CD8-positive, alpha-beta T cell (primary cell): ENCODE measurements at regions of chr19 and their contacts with region 1.

Region 1: DNA sequence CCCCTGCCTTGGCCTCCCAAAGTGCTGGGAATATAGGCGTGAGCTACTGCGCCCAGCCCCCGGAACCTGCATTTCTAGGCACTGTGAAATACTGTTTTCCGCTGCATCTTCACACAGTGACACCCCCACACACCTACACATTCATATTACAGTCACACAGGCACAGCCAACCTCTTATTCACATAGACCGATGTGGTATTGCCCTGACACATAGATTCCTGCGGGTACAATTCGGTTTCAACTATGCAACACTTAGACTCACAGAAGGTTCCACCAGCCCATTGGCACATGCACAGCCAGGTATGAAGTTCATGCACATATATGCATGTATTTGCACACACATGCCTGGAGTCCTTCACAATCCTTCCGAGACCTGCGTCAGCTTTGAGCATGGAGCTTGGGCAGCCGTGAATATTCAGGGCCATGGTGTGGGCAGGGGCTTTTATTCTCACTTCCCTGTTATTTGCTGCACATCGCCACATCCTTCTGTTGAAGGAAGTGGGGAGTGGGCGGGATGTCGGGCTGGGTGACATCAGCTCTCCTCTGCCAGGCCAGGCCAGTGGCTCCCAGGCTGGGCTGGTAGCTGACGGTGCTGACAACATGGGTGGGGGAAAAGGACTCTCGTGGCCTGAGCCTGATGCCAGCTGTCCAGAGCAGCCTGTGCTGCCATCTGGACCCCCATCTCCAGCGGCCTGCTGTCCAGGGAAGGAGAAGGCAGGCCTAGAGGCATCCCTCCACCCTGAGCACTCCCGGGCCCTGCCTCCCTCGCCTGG is 5.4 kb upstream of the CDC37 start:
- DNase-seq: peak in 5 of 9 experiments; percentile 60 to 85 (median 68)
- ATAC-seq: peak; percentile 33
- H3K4me3 ChIP-seq: peak overlapping the region; percentile 9 to 26
- H3K4me3 Mint-ChIP-seq: peak overlapping the region; percentile 60
- H3K27ac ChIP-seq: peak overlapping the region; percentile 38 to 72
- H3K27ac Mint-ChIP-seq: peak overlapping the region; percentile 88
- H3K4me1 ChIP-seq: peaks cover 66% of the 10 kb centered on the region
- H3K4me1 Mint-ChIP-seq: peaks cover 66% of the 10 kb centered on the region
- H3K27me3 ChIP-seq: peaks cover 0 to 3% of the 10 kb centered on the region in 2 experiments
- H3K27me3 Mint-ChIP-seq: no peaks in the 10 kb centered on the region
- CTCF ChIP-seq: no peak

Region 2: DNA sequence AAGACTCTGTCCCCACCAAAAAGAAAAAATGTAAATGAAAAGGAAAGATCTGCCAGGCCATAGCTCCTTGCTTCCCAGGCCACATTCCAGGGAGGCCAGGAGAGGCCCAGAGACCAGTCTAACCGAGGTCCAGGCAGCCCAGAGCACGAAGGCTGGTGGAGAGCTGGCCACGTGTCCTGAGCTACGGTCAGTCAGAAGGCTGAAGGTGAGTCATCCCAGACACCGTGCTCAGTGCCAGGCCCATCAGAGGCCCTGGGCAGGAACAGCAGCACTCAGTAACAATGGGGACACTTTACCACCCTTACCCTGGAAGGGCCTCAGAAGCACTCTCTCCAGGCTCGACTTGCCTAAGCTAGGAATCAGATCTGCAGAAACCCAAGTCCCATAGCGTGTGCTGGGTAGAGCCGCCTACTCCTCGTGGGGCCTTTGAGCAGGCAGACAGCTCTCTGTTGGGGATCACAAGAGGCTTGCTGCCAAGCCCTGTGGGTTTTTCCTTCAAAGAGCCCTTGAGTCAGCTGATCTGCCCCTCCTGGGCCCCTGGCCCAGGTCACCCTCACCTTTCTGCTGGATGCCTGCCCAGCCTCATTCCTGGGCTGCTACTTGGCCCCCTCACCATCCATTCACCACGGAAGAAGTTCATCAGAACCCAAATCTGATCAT is 202.3 kb before region 1 on chr19:
- CTCF ChIA-PET with region 1: no interaction called
- POLR2A ChIA-PET with region 1: no interaction called
- intact Hi-C with region 1: no loop called
- DNase-seq: no peak
- ATAC-seq: no peak
- H3K4me3 ChIP-seq: no peak overlapping the region
- H3K4me3 Mint-ChIP-seq: no peak overlapping the region
- H3K27ac ChIP-seq: no peak overlapping the region
- H3K27ac Mint-ChIP-seq: no peak overlapping the region
- H3K4me1 ChIP-seq: no peaks in the 10 kb centered on the region
- H3K4me1 Mint-ChIP-seq: no peaks in the 10 kb centered on the region
- H3K27me3 ChIP-seq: no peaks in the 10 kb centered on the region
- H3K27me3 Mint-ChIP-seq: no peaks in the 10 kb centered on the region
- CTCF ChIP-seq: no peak

Region 3: DNA sequence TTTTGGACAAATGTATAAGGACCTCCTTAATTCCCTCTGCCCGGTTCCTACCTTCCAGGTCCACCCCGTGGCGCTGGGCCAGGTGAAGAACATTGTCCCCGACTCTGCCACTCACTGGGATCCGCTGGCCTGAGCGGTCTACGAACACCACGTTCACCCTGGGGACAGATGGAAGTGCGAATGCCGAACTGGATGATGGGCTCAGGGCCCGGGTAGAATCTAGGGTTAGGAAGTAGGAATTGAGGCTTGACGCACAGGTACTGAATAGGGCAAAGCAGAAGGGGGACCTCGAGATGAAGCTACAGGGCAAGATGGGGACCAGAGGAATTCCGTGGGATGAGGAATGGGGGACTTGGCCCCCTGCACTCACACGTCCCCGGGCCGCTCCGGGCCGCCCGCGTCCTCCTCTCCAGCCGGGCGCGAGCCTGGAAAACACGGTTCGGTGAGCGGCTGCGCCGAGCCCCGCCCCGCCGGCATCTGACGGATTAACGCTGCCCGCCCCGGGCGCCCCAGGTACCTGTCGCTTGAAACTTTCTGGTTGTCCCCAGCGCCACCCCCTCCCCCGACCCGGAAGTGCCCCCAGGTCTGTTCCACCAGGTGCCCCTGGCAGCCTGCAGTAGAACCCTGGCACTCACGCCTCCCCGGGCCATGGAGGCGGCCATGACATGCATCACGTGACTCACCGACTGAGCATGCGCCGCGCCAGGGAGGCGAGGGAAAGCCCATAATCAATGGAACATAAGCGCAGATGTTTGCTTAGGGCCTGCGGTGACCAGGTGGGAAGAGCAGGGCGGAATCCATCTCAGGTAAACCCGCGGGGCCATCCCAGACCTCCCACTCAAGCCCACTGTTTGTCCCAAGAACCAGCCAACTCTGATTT is 93.1 kb before region 1 on chr19 and contains the start of gene FDX2:
- CTCF ChIA-PET with region 1: no interaction called
- POLR2A ChIA-PET with region 1: no interaction called
- intact Hi-C with region 1: no loop called
- DNase-seq: peak; percentile 76 to 94 (median 91)
- ATAC-seq: peak; percentile 91
- H3K4me3 ChIP-seq: peak within 1 kb of the TSS; percentile 58 to 94
- H3K4me3 Mint-ChIP-seq: peak within 1 kb of the TSS; percentile 90
- H3K27ac ChIP-seq: peak within 1 kb of the TSS; percentile 41 to 51
- H3K27ac Mint-ChIP-seq: peak within 1 kb of the TSS; percentile 89
- H3K4me1 ChIP-seq: peaks cover 13% of the 10 kb centered on the region
- H3K4me1 Mint-ChIP-seq: peaks cover 12% of the 10 kb centered on the region
- H3K27me3 ChIP-seq: no peaks in the 10 kb centered on the region
- H3K27me3 Mint-ChIP-seq: no peaks in the 10 kb centered on the region
- CTCF ChIP-seq: no peak
- total RNA-seq, gene FDX2: 3.1 to 4.2 TPM

Region 4: DNA sequence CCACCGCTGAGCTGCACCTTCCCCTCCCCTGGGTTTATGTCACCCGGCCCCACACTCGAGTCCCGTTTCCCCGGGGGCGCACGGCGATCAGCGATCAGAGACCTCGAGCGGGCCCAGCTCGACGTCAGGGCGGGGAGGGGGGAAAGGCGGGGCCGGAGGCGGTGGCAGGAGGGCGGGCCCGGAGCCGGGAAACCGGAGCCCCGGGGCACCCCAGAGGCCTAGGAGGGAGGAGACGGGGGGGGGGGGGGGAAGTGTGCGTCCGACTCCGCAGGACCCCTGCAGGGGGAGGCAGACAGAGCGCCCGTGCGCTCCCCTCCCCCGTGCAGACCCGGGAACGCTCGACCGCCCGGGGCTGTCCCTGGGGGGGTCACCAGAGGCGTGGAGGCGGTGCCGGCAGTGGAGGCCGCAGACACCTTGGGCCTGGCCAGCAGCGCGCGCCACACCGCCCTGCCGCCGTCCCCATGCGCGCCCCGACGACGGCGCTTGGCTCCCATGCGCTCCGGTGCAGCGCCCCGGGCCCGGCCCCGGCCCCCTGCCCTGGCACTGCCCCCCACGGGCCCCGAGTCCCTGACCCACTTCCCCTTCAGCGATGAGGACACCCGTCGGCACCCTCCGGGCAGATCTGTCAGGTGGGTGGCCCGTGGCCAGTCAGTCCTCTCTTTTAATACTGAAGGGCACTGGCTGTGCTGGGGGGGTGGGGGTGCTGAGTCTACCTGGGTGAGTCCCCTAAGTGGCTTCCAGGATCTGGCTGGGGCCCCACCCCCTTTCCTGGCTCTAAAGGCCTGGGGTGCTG is 23.4 kb after region 1 on chr19:
- CTCF ChIA-PET with region 1: interaction called, 620 read pairs
- POLR2A ChIA-PET with region 1: interaction called, 12 read pairs
- intact Hi-C with region 1: loop called (anchors 1 kb)
- DNase-seq: peak in 8 of 9 experiments; percentile 60 to 90 (median 78)
- ATAC-seq: peak; percentile 35
- H3K4me3 ChIP-seq: peak overlapping the region; percentile 44 to 52
- H3K4me3 Mint-ChIP-seq: peak overlapping the region; percentile 87
- H3K27ac ChIP-seq: peak overlapping the region; percentile 43 to 77
- H3K27ac Mint-ChIP-seq: peak overlapping the region; percentile 92
- H3K4me1 ChIP-seq: peaks cover 37% of the 10 kb centered on the region
- H3K4me1 Mint-ChIP-seq: peaks cover 50% of the 10 kb centered on the region
- H3K27me3 ChIP-seq: peaks cover 0 to 7% of the 10 kb centered on the region in 2 experiments
- H3K27me3 Mint-ChIP-seq: peaks cover 23% of the 10 kb centered on the region
- CTCF ChIP-seq: no peak

Region 5: GRCh38 chr19:10748924-10749434 is 340.3 kb after region 1 on chr19:
- CTCF ChIA-PET with region 1: no interaction called
- POLR2A ChIA-PET with region 1: no interaction called
- intact Hi-C with region 1: no loop called
- DNase-seq: no peak
- ATAC-seq: no peak
- H3K4me3 ChIP-seq: no peak overlapping the region
- H3K4me3 Mint-ChIP-seq: no peak overlapping the region
- H3K27ac ChIP-seq: no peak overlapping the region
- H3K27ac Mint-ChIP-seq: peak overlapping the region; percentile 84
- H3K4me1 ChIP-seq: peaks cover 51% of the 10 kb centered on the region
- H3K4me1 Mint-ChIP-seq: peaks cover 79% of the 10 kb centered on the region
- H3K27me3 ChIP-seq: no peaks in the 10 kb centered on the region
- H3K27me3 Mint-ChIP-seq: no peaks in the 10 kb centered on the region
- CTCF ChIP-seq: no peak